Right ventricle myocardium superior (tissue), 1 donor: ENCODE measurements at regions of chr6 and their contacts with region 1.

Region 1: GRCh38 chr6:46234700-46235099 is 63.9 kb upstream of the ENPP5 start:
- DNase-seq: no peak
- ATAC-seq: peak; percentile 44

Region 2: GRCh38 chr6:46400898-46401297 is 166.2 kb after region 1 on chr6:
- intact Hi-C with region 1: loop called (anchors 5 kb)
- DNase-seq: no peak
- ATAC-seq: no peak